T-cell (primary cell): ENCODE measurements at regions of chr12 and their contacts with region 1.

Region 1: DNA sequence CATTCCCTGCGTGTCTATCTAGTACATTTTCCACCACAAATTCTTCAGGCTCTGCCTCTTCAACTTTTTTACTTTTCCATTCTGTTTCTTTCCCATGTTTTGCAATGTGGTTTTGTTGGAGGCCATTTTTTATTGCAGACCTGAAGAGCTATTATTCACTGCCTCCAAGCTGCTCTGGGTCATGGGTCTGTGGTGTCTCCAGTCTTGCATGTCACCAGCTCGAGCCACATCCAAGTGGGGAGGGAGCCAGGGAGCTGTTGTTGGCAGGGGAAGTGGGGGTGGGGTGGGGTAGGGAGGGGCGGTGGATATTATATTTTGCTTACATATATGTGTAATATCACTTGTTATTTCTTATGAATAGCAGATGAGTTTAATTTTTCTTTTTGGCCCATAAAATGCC is 69.1 kb downstream of the VEZT start:
- DNase-seq: no peak
- ATAC-seq: no peak
- H3K4me3 ChIP-seq: no peak overlapping the region
- H3K4me3 Mint-ChIP-seq: no peak overlapping the region
- H3K27ac ChIP-seq: no peak overlapping the region
- H3K27ac Mint-ChIP-seq: no peak overlapping the region
- H3K4me1 ChIP-seq: no peaks in the 10 kb centered on the region
- H3K4me1 Mint-ChIP-seq: no peaks in the 10 kb centered on the region
- H3K27me3 ChIP-seq: no peaks in the 10 kb centered on the region
- H3K27me3 Mint-ChIP-seq: no peaks in the 10 kb centered on the region

Region 2: DNA sequence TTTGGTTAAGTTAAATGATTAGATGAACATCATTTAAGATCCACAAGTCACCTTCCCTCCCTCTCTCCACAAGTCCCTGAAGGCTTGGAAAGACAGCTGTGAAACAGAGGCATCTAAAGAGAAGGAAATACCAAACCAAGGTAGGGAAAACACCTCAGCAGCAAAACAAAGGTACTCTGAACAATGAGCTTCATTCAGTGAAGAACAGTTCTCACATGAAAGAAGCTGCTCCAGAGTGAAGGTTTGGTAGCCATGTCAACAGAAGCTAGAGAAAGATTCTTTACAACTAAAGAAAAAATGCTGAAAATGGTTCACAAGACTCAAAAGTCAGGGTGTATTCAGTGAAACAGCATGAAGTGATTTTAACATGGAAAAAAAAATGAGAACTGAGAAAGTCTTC is 138.8 kb before region 1 on chr12:
- CTCF ChIA-PET with region 1: no interaction called
- POLR2A ChIA-PET with region 1: no interaction called
- DNase-seq: no peak
- ATAC-seq: no peak
- H3K4me3 ChIP-seq: no peak overlapping the region
- H3K4me3 Mint-ChIP-seq: no peak overlapping the region
- H3K27ac ChIP-seq: no peak overlapping the region
- H3K27ac Mint-ChIP-seq: no peak overlapping the region
- H3K4me1 ChIP-seq: no peaks in the 10 kb centered on the region
- H3K4me1 Mint-ChIP-seq: no peaks in the 10 kb centered on the region
- H3K27me3 ChIP-seq: no peaks in the 10 kb centered on the region
- H3K27me3 Mint-ChIP-seq: no peaks in the 10 kb centered on the region

Region 3: GRCh38 chr12:95304673-95305198 is 18.0 kb after region 1 on chr12:
- CTCF ChIA-PET with region 1: interaction called in 1 of 2 experiments, 4 read pairs
- POLR2A ChIA-PET with region 1: interaction called in 1 of 2 experiments, 10 read pairs
- DNase-seq: no peak
- ATAC-seq: no peak
- H3K4me3 ChIP-seq: no peak overlapping the region
- H3K4me3 Mint-ChIP-seq: no peak overlapping the region
- H3K27ac ChIP-seq: no peak overlapping the region
- H3K27ac Mint-ChIP-seq: no peak overlapping the region
- H3K4me1 ChIP-seq: no peaks in the 10 kb centered on the region
- H3K4me1 Mint-ChIP-seq: no peaks in the 10 kb centered on the region
- H3K27me3 ChIP-seq: no peaks in the 10 kb centered on the region
- H3K27me3 Mint-ChIP-seq: no peaks in the 10 kb centered on the region

Region 4: GRCh38 chr12:95674631-95675030 is 387.9 kb after region 1 on chr12:
- CTCF ChIA-PET with region 1: no interaction called
- POLR2A ChIA-PET with region 1: no interaction called
- DNase-seq: no peak
- ATAC-seq: no peak
- H3K4me3 ChIP-seq: no peak overlapping the region
- H3K4me3 Mint-ChIP-seq: no peak overlapping the region
- H3K27ac ChIP-seq: no peak overlapping the region
- H3K27ac Mint-ChIP-seq: no peak overlapping the region
- H3K4me1 ChIP-seq: no peaks in the 10 kb centered on the region
- H3K4me1 Mint-ChIP-seq: no peaks in the 10 kb centered on the region
- H3K27me3 ChIP-seq: no peaks in the 10 kb centered on the region
- H3K27me3 Mint-ChIP-seq: peaks cover 5 to 9% of the 10 kb centered on the region in 2 donors